CD4-positive, alpha-beta memory T cell (primary cell): ENCODE measurements at regions of chr1 and their contacts with region 1.

Region 1: GRCh38 chr1:159015440-159015909 is 5.8 kb downstream of the IFI16 start:
- DNase-seq: peak; percentile 53 to 89 (median 63)
- H3K4me3 ChIP-seq: peak overlapping the region in 1 of 2 donors; percentile 26
- H3K4me3 Mint-ChIP-seq: peak overlapping the region; percentile 71 to 95 (median 84)
- H3K27ac ChIP-seq: peak overlapping the region; percentile 47
- H3K27ac Mint-ChIP-seq: peak overlapping the region; percentile 83 to 94 (median 91)
- H3K4me1 ChIP-seq: peaks cover 67% of the 10 kb centered on the region
- H3K4me1 Mint-ChIP-seq: peaks cover 55 to 79% (median 63%) of the 10 kb centered on the region in 4 donors
- H3K27me3 ChIP-seq: no peaks in the 10 kb centered on the region
- H3K27me3 Mint-ChIP-seq: no peaks in the 10 kb centered on the region

Region 2: DNA sequence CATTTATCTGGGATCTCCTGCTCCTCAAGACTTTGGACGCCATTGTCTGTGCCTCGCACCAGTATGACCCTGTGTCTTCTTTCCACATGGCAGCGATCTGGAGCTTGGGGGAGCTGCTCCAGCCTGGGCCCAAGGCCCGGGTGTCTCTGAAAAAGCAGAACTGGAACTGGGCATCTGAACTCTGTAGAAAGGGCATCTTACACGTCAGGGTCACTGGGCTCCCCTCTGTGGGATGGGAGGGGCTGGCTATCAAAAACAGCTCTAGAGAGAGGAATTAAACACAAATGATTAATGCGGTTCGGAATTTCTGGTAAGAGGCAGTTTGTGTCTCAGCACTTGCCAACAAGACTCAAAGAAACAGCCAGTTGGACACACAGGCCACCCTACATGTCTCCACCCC is 1211.6 kb before region 1 on chr1:
- CTCF ChIA-PET with region 1: no interaction called
- POLR2A ChIA-PET with region 1: no interaction called
- intact Hi-C with region 1: no loop called
- DNase-seq: no peak
- H3K4me3 ChIP-seq: no peak overlapping the region
- H3K4me3 Mint-ChIP-seq: no peak overlapping the region
- H3K27ac ChIP-seq: no peak overlapping the region
- H3K27ac Mint-ChIP-seq: no peak overlapping the region
- H3K4me1 ChIP-seq: no peaks in the 10 kb centered on the region
- H3K4me1 Mint-ChIP-seq: no peaks in the 10 kb centered on the region
- H3K27me3 ChIP-seq: no peaks in the 10 kb centered on the region
- H3K27me3 Mint-ChIP-seq: peaks cover 4 to 10% of the 10 kb centered on the region in 2 donors

Region 3: DNA sequence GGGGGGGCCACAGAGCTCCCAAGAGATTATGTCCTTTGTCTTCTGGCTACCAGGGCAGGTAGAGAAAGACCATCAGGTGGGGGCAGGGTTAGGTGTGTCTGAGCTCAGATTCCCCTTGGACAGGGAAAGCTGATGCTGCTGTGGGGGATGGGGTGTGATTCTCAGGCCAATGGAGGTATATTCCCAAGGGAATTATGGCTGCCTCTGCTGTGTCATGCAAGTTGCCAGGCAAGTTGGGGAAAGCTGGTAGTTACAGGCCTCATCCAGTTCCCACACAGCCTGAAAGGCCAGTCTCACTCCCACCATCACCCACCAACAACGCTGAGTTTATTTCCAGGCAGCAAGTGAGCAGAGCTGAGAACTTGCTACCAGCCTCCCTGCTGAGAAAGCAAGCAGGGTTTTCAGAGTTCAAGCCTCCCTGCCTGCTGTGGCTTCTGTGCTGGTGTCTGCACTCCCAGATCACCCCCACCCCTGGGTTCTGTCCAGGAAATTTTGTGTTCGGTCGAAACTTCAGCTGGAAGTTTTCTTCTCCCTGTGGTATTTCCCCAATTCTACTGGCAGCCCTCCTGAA is 15.5 kb after region 1 on chr1:
- CTCF ChIA-PET with region 1: no interaction called
- POLR2A ChIA-PET with region 1: interaction called, 5 read pairs
- intact Hi-C with region 1: loop called (anchors 2 kb)
- DNase-seq: no peak
- H3K4me3 ChIP-seq: no peak overlapping the region
- H3K4me3 Mint-ChIP-seq: no peak overlapping the region
- H3K27ac ChIP-seq: no peak overlapping the region
- H3K27ac Mint-ChIP-seq: peak overlapping the region in 6 of 7 donors; percentile 14 to 77 (median 66)
- H3K4me1 ChIP-seq: peaks cover 41% of the 10 kb centered on the region
- H3K4me1 Mint-ChIP-seq: peaks cover 55 to 78% (median 67%) of the 10 kb centered on the region in 4 donors
- H3K27me3 ChIP-seq: no peaks in the 10 kb centered on the region
- H3K27me3 Mint-ChIP-seq: no peaks in the 10 kb centered on the region

Region 4: GRCh38 chr1:159448181-159448580 is 432.7 kb after region 1 on chr1:
- CTCF ChIA-PET with region 1: no interaction called
- POLR2A ChIA-PET with region 1: no interaction called
- intact Hi-C with region 1: no loop called
- DNase-seq: no peak
- H3K4me3 ChIP-seq: no peak overlapping the region
- H3K4me3 Mint-ChIP-seq: no peak overlapping the region
- H3K27ac ChIP-seq: no peak overlapping the region
- H3K27ac Mint-ChIP-seq: no peak overlapping the region
- H3K4me1 ChIP-seq: no peaks in the 10 kb centered on the region
- H3K4me1 Mint-ChIP-seq: no peaks in the 10 kb centered on the region
- H3K27me3 ChIP-seq: no peaks in the 10 kb centered on the region
- H3K27me3 Mint-ChIP-seq: peaks cover 4 to 9% of the 10 kb centered on the region in 2 donors

Region 5: GRCh38 chr1:159945483-159946241 is 930.2 kb after region 1 on chr1 and contains the start of gene IGSF9:
- CTCF ChIA-PET with region 1: no interaction called
- POLR2A ChIA-PET with region 1: no interaction called
- intact Hi-C with region 1: no loop called
- DNase-seq: peak; percentile 68 to 79 (median 71)
- H3K4me3 ChIP-seq: peak within 1 kb of the TSS in 1 of 2 donors; percentile 38
- H3K4me3 Mint-ChIP-seq: peak within 1 kb of the TSS; percentile 32 to 86 (median 68)
- H3K27ac ChIP-seq: no peak within 1 kb of the TSS
- H3K27ac Mint-ChIP-seq: peak within 1 kb of the TSS in 3 of 7 donors; percentile 12 to 87 (median 65)
- H3K4me1 ChIP-seq: peaks cover 13% of the 10 kb centered on the region
- H3K4me1 Mint-ChIP-seq: peaks cover 8 to 12% (median 10%) of the 10 kb centered on the region in 4 donors
- H3K27me3 ChIP-seq: peaks cover 21% of the 10 kb centered on the region
- H3K27me3 Mint-ChIP-seq: peaks cover 25 to 35% of the 10 kb centered on the region in 2 donors
- total RNA-seq, gene IGSF9: not detected